Sciatic nerve (tissue), 2 donors: ENCODE measurements at regions of chr15 and their contacts with region 1.

Region 1: DNA sequence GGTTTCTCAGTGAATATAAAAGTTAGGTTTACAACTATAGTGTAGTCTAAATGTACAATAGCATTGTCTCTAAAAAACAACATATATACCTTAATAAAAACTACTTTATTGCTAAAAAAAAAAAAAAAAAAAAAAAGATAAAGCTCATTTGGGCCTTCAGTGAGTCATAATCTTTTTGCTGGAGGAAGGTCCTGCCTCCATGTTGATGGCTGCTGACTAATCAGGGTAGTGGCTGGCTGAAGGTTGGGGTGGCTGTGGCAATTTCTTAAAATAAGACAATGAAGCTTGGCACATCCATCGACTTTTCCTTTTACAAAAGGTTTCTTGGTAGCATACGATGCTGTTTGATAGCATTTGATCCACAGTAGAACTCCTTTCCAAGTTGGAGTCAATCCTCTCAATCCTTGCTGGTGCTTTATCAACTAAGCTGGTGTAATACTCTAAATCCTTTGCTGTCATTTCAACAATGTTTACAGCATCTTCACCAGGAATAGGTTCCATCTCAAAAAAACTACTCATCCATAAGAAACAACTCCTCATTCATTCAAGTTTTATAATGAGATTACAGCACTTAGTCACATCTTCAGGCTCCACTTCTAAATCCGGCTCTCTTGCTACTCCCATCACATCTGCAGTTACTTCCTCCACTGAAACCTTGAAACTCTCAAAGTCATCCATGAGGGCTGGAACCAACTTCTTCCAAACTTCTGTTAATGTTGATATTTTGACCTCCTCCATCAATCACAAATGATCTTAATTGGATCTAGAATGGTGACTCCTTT is 13.3 kb downstream of the ZNF280D start:
- DNase-seq: no peak
- ATAC-seq: no peak

Region 2: GRCh38 chr15:56631765-56632164 is 88.2 kb before region 1 on chr15:
- intact Hi-C with region 1: loop called (anchors 10 kb)
- DNase-seq: no peak
- ATAC-seq: no peak